PC-9 (cell line): ENCODE measurements at regions of chr10 and their contacts with region 1.

Region 1: GRCh38 chr10:97869091-97870042 is 19.7 kb downstream of the GOLGA7B start:
- DNase-seq: peak; percentile 72 to 82
- H3K4me3 ChIP-seq: no peak overlapping the region
- H3K27ac ChIP-seq: no peak overlapping the region
- H3K4me1 ChIP-seq: peaks cover 13% of the 10 kb centered on the region
- H3K27me3 ChIP-seq: no peaks in the 10 kb centered on the region
- CTCF ChIP-seq: peak; percentile 75

Region 2: GRCh38 chr10:97759158-97759887 is 110.0 kb before region 1 on chr10:
- CTCF ChIA-PET with region 1: no interaction called
- POLR2A ChIA-PET with region 1: no interaction called
- intact Hi-C with region 1: loop called (anchors 1 kb)
- DNase-seq: peak; percentile 36 to 48
- H3K4me3 ChIP-seq: no peak overlapping the region
- H3K27ac ChIP-seq: no peak overlapping the region
- H3K4me1 ChIP-seq: no peaks in the 10 kb centered on the region
- H3K27me3 ChIP-seq: no peaks in the 10 kb centered on the region
- CTCF ChIP-seq: peak; percentile 78

Region 3: GRCh38 chr10:97792141-97792721 is 77.1 kb before region 1 on chr10:
- CTCF ChIA-PET with region 1: interaction called, 4 read pairs
- POLR2A ChIA-PET with region 1: no interaction called
- intact Hi-C with region 1: loop called (anchors 1 kb)
- DNase-seq: peak in 1 of 2 experiments; percentile 53
- H3K4me3 ChIP-seq: no peak overlapping the region
- H3K27ac ChIP-seq: no peak overlapping the region
- H3K4me1 ChIP-seq: no peaks in the 10 kb centered on the region
- H3K27me3 ChIP-seq: no peaks in the 10 kb centered on the region
- CTCF ChIP-seq: peak; percentile 90